ENCODE measurements at regions of chr3 and their contacts with region 1.

Region 1: DNA sequence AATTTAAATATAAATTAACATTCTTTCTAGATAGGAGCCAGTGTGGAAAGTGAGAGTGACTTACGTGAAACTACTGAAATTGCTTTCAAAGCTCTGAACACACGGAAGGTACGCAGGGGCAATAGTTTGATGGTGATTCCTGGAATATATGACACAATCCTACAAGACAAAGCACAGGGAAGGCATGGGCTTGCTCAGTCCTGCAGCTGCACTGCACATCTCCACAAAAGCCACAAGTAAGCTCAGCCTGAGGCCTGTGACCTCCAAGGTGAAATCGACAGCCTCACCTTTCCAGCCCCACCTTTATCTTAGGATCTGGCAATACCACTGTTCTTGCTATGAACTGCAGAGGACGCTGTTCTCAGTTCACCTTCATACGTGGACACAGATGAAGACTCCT is 109.3 kb upstream of the SCN10A start:
- DNase-seq: no peak
- H3K4me3 ChIP-seq: no peak overlapping the region
- H3K27ac ChIP-seq: no peak overlapping the region
- H3K4me1 ChIP-seq: no peaks in the 10 kb centered on the region
- H3K27me3 ChIP-seq: no peaks in the 10 kb centered on the region; the same call in none of the 2 replicates
- CTCF ChIP-seq: no peak

Region 2: GRCh38 chr3:38627956-38628355 is 297.4 kb before region 1 on chr3:
- CTCF ChIA-PET with region 1: no interaction called
- POLR2A ChIA-PET with region 1: no interaction called
- intact Hi-C with region 1: no loop called
- DNase-seq: no peak
- H3K4me3 ChIP-seq: no peak overlapping the region
- H3K27ac ChIP-seq: no peak overlapping the region
- H3K4me1 ChIP-seq: no peaks in the 10 kb centered on the region
- H3K27me3 ChIP-seq: no peaks in the 10 kb centered on the region; the same call in 1 of the 2 replicates
- CTCF ChIP-seq: peak; percentile 42; the same call in 1 of the 2 replicates

Region 3: GRCh38 chr3:38689774-38690173 is 235.6 kb before region 1 on chr3:
- CTCF ChIA-PET with region 1: no interaction called
- POLR2A ChIA-PET with region 1: interaction called, 12 read pairs
- intact Hi-C with region 1: no loop called
- DNase-seq: no peak
- H3K4me3 ChIP-seq: no peak overlapping the region
- H3K27ac ChIP-seq: no peak overlapping the region
- H3K4me1 ChIP-seq: no peaks in the 10 kb centered on the region
- H3K27me3 ChIP-seq: peaks cover 38% of the 10 kb centered on the region
- CTCF ChIP-seq: no peak

Measured in PC-9 (cell line).